ENCODE measurements at regions of chr12 and their contacts with region 1.

Region 1: GRCh38 chr12:46268590-46269558 is at the start of gene SLC38A1:
- DNase-seq: peak; percentile 88
- ATAC-seq: peak; percentile 72
- H3K4me3 Mint-ChIP-seq: no peak within 1 kb of the TSS
- H3K27ac Mint-ChIP-seq: no peak within 1 kb of the TSS
- H3K4me1 Mint-ChIP-seq: peaks cover 15% of the 10 kb centered on the region
- H3K27me3 Mint-ChIP-seq: no peaks in the 10 kb centered on the region
- total RNA-seq, gene SLC38A1: 194 to 207 TPM

Region 2: GRCh38 chr12:45990468-45991283 is 278.2 kb before region 1 on chr12 and contains the start of gene SCAF11:
- POLR2A ChIA-PET with region 1: interaction called, 31 read pairs
- DNase-seq: peak; percentile 100
- ATAC-seq: peak; percentile 82
- H3K4me3 Mint-ChIP-seq: peak within 1 kb of the TSS; percentile 98
- H3K27ac Mint-ChIP-seq: peak within 1 kb of the TSS; percentile 100
- H3K4me1 Mint-ChIP-seq: peaks cover 40% of the 10 kb centered on the region
- H3K27me3 Mint-ChIP-seq: peaks cover 5% of the 10 kb centered on the region
- total RNA-seq, gene SCAF11: 157 to 161 TPM

Region 3: GRCh38 chr12:46108721-46109120 is 160.2 kb before region 1 on chr12:
- POLR2A ChIA-PET with region 1: no interaction called
- DNase-seq: no peak
- ATAC-seq: no peak
- H3K4me3 Mint-ChIP-seq: no peak overlapping the region
- H3K27ac Mint-ChIP-seq: no peak overlapping the region
- H3K4me1 Mint-ChIP-seq: peaks cover 3% of the 10 kb centered on the region
- H3K27me3 Mint-ChIP-seq: no peaks in the 10 kb centered on the region

Region 4: DNA sequence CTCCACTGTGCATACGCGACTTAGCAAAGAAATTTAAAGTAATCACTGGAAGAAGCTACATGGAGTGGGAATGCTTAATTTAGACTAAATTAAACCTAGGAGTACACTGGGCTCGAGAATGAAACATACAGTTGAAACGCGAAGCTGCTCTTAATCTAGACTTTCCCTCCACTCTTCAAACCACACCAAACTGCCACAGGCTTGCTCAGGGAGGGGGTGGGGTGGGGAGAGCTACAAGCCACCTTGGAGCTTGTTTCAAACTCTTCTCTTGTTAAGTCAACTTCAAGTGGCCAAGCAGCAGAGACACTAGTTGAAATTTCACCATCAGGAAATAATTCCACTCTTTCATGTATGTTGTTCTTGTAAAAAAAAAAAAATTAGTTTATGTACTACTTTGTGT is 70.0 kb before region 1 on chr12:
- POLR2A ChIA-PET with region 1: interaction called, 15 read pairs
- DNase-seq: no peak
- ATAC-seq: peak; percentile 47
- H3K4me3 Mint-ChIP-seq: no peak overlapping the region
- H3K27ac Mint-ChIP-seq: peak overlapping the region; percentile 22
- H3K4me1 Mint-ChIP-seq: peaks cover 10% of the 10 kb centered on the region
- H3K27me3 Mint-ChIP-seq: no peaks in the 10 kb centered on the region

Region 5: DNA sequence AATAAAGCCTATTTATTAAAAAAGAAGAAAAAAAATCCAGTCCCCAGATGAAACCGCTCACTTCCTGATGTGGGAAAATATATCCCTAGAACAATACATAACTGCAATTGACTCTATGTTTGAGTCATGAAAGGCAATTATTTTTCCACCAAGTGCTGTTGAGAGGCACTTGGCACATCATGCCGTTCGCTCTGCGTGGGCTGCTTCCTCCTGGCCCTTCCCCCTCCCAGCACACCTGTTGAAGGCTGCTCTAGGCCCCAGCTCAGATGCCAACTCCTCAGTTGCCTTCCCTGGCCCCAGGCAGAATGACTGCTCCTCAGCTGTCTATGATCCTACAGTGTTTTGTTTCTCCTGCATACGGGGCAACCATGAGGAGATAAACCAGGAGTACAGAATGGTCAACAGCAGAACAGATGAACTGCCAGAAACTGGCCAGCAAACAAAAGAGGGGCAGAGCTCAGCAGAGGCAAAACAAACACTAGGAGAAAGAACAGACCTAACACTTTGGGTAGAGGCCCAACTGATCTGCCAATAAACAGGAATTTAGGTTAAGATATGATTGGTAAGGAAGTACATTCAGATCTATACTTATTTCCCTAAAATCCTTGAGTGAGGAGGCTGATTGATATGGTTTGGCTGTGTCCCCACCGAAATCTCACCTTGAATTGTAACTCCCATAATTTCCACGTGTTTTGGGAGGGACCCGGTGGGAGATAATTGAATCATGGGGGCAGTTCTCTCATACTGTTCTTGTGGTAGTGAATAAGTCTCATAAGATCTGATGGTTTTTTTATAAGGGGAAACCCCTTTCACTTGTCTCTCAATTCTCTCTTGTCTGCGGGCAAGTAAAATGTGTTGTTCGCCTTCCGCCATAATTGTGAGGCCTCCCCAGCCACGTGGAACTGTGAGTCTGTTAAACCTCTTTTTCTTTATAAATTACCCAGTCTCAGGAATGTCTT is 58.7 kb before region 1 on chr12:
- POLR2A ChIA-PET with region 1: interaction called, 198 read pairs
- DNase-seq: peak; percentile 44
- ATAC-seq: peak; percentile 39
- H3K4me3 Mint-ChIP-seq: peak overlapping the region; percentile 35
- H3K27ac Mint-ChIP-seq: peak overlapping the region; percentile 86
- H3K4me1 Mint-ChIP-seq: peaks cover 58% of the 10 kb centered on the region
- H3K27me3 Mint-ChIP-seq: no peaks in the 10 kb centered on the region

Region 6: GRCh38 chr12:46217541-46218321 is 51.1 kb before region 1 on chr12:
- POLR2A ChIA-PET with region 1: interaction called, 198 read pairs
- DNase-seq: peak; percentile 47
- ATAC-seq: no peak
- H3K4me3 Mint-ChIP-seq: peak overlapping the region; percentile 75
- H3K27ac Mint-ChIP-seq: peak overlapping the region; percentile 93
- H3K4me1 Mint-ChIP-seq: peaks cover 86% of the 10 kb centered on the region
- H3K27me3 Mint-ChIP-seq: no peaks in the 10 kb centered on the region

Region 7: DNA sequence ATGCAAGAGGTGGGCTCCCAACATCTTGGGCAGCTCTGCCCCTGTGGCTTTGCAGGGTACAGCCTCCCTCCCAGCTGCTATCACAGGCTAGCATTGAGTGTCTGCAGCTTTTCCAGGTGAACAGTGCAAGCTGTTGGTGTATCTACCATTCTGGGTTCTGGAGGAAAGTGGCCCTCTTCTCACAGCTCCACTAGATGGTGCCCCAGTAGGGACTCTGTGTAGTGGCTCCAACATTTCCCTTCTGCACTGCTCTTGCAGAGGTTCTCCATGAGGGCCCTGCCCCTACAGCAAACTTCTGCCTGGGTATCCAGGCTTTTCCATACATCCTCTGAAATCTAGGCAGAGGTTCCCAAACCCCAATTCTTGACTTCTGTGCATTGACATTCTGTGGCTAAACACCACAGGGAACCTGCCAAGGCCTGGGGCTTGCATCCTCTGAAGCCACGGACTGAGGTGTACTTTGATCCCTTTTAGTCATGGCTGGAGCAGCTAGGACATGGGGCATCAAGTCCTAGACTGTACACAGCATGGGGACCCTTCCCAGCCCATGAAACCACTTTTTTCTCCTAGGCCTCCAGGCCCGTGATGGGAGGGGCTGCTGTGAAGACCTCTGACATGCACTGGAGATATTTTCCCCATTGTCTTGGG is 24.0 kb after region 1 on chr12:
- POLR2A ChIA-PET with region 1: no interaction called
- DNase-seq: no peak
- ATAC-seq: no peak
- H3K4me3 Mint-ChIP-seq: no peak overlapping the region
- H3K27ac Mint-ChIP-seq: no peak overlapping the region
- H3K4me1 Mint-ChIP-seq: no peaks in the 10 kb centered on the region
- H3K27me3 Mint-ChIP-seq: peaks cover 2% of the 10 kb centered on the region

Region 8: GRCh38 chr12:46342562-46343033 is 73.7 kb after region 1 on chr12:
- POLR2A ChIA-PET with region 1: no interaction called
- DNase-seq: no peak
- ATAC-seq: peak; percentile 52
- H3K4me3 Mint-ChIP-seq: no peak overlapping the region
- H3K27ac Mint-ChIP-seq: no peak overlapping the region
- H3K4me1 Mint-ChIP-seq: no peaks in the 10 kb centered on the region
- H3K27me3 Mint-ChIP-seq: peaks cover 8% of the 10 kb centered on the region

Region 9: DNA sequence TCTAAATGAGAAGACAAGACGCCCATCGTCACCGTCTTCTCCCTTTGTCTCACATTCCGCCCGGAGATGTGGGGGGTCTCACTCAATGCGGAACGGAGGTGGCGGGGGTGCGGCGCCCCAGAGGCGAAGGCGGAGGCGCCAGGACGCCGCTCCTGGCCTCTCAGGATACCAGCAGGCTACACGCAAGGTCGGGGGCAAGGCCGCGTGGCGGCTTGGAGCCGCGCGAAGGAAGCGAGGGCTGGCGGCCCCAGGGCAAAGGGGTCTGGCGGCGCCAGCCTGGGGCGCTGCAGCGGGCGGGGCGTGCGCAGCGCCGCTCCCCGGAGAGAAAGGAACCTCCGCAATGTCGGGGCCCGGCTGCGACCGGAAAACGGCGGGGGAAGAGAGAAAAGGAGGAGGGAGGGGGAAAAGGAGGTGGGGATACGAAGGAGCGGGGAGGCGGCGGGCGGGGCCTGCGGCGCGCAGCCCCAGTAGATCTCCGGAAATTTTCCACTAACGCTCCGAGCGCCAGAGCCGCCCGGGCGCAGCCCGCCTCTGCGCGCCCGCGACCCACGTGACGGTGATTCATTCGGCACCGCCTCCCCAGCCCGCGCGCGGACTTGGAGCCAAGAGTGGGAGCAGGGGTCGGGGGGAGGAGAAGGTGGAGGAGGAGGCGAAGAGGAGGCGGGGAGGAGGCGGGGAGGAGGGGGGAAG is 114.2 kb after region 1 on chr12:
- POLR2A ChIA-PET with region 1: interaction called, 10 read pairs
- DNase-seq: peak; percentile 95
- ATAC-seq: peak; percentile 87
- H3K4me3 Mint-ChIP-seq: peak overlapping the region; percentile 93
- H3K27ac Mint-ChIP-seq: peak overlapping the region; percentile 92
- H3K4me1 Mint-ChIP-seq: peaks cover 40% of the 10 kb centered on the region
- H3K27me3 Mint-ChIP-seq: peaks cover 3% of the 10 kb centered on the region

Region 10: GRCh38 chr12:46523863-46524770 is 255.2 kb after region 1 on chr12:
- POLR2A ChIA-PET with region 1: interaction called, 12 read pairs
- DNase-seq: peak; percentile 54
- ATAC-seq: peak; percentile 96
- H3K4me3 Mint-ChIP-seq: peak overlapping the region; percentile 77
- H3K27ac Mint-ChIP-seq: peak overlapping the region; percentile 96
- H3K4me1 Mint-ChIP-seq: peaks cover 40% of the 10 kb centered on the region
- H3K27me3 Mint-ChIP-seq: no peaks in the 10 kb centered on the region

Region 11: DNA sequence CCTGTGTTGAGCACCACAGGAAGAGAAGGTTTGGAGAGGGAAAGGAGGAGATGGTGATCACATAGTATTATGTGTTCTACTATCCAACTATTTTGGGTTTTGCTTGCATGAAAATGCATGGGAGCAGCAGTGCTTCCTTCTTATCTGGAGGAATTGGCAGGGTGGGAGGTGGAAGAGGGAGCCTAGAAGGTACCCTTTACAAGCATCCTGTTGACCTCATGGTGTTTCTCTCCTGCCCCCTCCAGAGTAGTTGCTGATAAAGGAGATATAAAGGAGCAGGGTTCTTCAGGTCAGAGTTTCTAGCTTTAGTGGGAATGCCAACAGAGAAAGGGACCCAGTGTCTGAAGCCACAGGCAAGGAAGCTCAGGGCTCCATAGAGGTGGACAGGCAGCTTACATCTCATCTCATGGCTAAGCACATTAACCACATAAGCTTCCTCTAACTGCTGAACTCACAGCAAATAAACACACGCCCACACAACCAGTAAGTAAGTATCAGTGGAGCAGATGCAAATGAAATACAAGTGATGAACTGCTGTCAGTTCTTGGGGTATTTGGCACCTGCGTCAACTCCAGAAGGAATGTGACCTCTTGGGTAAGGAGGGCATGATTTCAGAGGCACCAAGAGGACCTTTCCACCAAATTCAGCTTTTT is 277.9 kb after region 1 on chr12:
- POLR2A ChIA-PET with region 1: no interaction called
- DNase-seq: no peak
- ATAC-seq: peak; percentile 83
- H3K4me3 Mint-ChIP-seq: peak overlapping the region; percentile 32
- H3K27ac Mint-ChIP-seq: peak overlapping the region; percentile 69
- H3K4me1 Mint-ChIP-seq: peaks cover 43% of the 10 kb centered on the region
- H3K27me3 Mint-ChIP-seq: no peaks in the 10 kb centered on the region

Measured in activated naive CD8-positive, alpha-beta T cell treated with anti-CD3 and anti-CD28 coated beads, Interleukin-2, amount 10 ng/mL, durations not matched to agents 7 days and 5 days (primary cell).